ENCODE measurements at regions of chr9 and their contacts with region 1.

Region 1: DNA sequence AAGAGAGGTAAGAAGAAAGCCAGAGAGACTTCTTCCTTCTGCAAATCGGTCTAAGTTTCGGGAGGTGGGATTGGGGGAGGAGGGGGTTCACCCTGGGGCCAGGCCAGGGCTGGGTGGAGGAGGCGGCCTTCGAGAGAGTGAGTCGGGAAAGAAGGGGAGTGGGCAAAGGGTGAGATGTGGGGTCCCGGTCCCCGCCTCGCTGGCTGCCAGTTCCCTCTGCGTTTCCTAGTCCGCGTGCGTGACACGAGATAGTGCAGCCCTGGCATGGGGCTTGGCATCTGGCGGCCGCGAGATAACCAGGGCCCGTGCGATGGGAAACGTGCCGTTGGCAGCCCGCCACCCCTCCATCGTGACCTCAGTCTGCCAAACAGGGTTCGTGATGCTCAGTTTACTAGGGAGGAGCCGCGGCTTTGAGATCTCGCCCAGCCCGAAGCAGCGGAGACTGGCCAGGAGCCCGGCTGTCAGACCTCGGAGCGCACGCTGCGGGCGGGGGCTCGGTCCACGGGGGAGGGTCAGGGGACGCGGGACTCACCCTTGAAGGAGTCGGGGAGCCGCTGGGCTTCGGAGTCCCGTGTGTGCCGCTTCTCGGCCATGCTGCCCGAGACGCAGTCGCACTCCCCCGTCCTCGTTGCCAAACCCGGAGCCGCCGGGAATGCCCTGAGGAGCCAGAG is at the start of gene STOM:
- DNase-seq: peak; percentile 91
- ATAC-seq: peak; percentile 70
- total RNA-seq, gene STOM: 194 TPM

Region 2: DNA sequence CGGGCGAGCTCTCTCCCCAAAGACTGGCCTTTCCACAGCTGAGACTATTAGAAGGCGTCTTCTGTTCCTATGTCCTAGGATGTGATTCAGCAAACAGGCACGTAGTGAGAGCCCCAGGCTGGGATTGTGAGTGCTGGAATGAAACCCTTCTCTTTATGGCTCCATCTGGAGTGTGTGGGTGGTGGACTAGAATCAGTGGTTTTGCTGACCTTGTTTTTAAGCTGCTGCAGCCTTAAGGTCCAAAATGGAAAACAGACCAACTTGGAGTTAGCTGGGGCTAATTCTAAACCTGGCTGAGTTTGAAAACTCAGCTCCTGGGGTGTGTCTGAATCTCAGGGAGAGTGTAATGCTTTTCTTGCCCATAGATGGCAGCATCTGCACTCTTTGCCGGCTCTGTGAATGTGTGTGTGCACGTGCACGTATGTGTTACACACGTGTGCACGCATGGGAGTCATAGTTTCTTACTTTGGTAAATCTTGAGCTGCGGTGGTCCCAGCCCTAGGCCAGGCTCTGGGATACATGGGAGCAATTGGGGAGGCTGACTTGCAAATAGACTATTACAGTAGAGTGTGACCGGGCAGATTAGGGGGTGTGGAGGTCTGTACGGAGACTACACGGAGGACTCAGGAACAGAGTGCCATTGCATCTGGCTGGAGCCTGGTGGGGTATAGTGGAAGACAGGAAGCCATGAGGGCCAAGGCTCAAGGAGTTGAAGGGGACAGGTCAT is 91.0 kb before region 1 on chr9:
- intact Hi-C with region 1: loop called (anchors 5 kb)
- DNase-seq: peak; percentile 67
- ATAC-seq: peak; percentile 65

Region 3: DNA sequence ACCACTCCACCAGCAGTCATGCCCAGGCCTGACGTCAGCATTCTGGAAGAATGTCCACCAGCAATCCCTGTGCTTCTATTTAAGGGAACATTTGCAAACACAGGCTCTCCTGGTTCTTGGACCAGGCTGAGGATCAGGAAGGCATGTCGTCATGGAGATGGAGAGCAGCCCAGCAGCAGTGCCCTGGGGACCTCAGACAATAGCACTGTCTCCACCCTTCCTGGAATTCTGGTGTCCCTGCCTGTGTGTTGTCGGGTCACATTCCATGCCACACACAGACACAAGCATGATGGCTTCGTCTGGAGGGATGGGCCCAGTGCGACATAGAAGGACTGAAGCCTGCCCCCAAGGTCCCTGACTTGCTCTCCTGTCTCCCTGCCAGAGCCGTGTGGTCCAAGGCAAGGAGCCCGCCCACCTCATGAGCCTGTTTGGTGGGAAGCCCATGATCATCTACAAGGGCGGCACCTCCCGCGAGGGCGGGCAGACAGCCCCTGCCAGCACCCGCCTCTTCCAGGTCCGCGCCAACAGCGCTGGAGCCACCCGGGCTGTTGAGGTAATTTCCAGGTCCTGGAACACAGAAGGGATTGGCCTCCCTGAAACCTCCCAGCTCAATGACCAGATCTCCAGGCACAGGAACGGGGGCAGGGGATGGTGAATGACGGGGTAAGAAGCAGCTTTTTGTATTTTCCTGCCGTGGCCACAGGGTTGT is 43.4 kb before region 1 on chr9:
- intact Hi-C with region 1: loop called (anchors 1 kb)
- DNase-seq: peak; percentile 90
- ATAC-seq: peak; percentile 93

Region 4: GRCh38 chr9:121350993-121351561 is 18.7 kb before region 1 on chr9:
- intact Hi-C with region 1: loop called (anchors 2 kb)
- DNase-seq: no peak
- ATAC-seq: peak; percentile 58